Left colon (tissue), 2 donors: ENCODE measurements at regions of chr17 and their contacts with region 1.

Region 1: GRCh38 chr17:13909901-13910519 is 159.3 kb upstream of the COX10 start:
- DNase-seq: no peak
- ATAC-seq: no peak

Region 2: GRCh38 chr17:13735444-13735843 is 174.6 kb before region 1 on chr17:
- intact Hi-C with region 1: loop called in 1 of 2 experiments (anchors 5 kb)
- DNase-seq: no peak
- ATAC-seq: no peak